ENCODE measurements at regions of chr3 and their contacts with region 1.

Region 1: GRCh38 chr3:183385698-183386613 is 42.5 kb downstream of the MCF2L2 start:
- DNase-seq: peak; percentile 71 to 88 (median 82)
- H3K4me3 ChIP-seq: no peak overlapping the region
- H3K27ac ChIP-seq: no peak overlapping the region
- H3K4me1 ChIP-seq: peaks cover 3 to 10% (median 7%) of the 10 kb centered on the region in 4 experiments
- H3K27me3 ChIP-seq: no peaks in the 10 kb centered on the region

Region 2: GRCh38 chr3:183122257-183122932 is 263.6 kb before region 1 on chr3:
- CTCF ChIA-PET with region 1: interaction called, 66 read pairs
- POLR2A ChIA-PET with region 1: no interaction called
- DNase-seq: peak; percentile 58 to 82 (median 75)
- H3K4me3 ChIP-seq: no peak overlapping the region
- H3K27ac ChIP-seq: no peak overlapping the region
- H3K4me1 ChIP-seq: no peaks in the 10 kb centered on the region
- H3K27me3 ChIP-seq: no peaks in the 10 kb centered on the region

Region 3: GRCh38 chr3:183193818-183194689 is 191.9 kb before region 1 on chr3:
- CTCF ChIA-PET with region 1: interaction called, 349 read pairs
- POLR2A ChIA-PET with region 1: no interaction called
- DNase-seq: no peak
- H3K4me3 ChIP-seq: no peak overlapping the region
- H3K27ac ChIP-seq: no peak overlapping the region
- H3K4me1 ChIP-seq: peaks cover 0 to 10% (median 2%) of the 10 kb centered on the region in 4 experiments
- H3K27me3 ChIP-seq: no peaks in the 10 kb centered on the region

Region 4: DNA sequence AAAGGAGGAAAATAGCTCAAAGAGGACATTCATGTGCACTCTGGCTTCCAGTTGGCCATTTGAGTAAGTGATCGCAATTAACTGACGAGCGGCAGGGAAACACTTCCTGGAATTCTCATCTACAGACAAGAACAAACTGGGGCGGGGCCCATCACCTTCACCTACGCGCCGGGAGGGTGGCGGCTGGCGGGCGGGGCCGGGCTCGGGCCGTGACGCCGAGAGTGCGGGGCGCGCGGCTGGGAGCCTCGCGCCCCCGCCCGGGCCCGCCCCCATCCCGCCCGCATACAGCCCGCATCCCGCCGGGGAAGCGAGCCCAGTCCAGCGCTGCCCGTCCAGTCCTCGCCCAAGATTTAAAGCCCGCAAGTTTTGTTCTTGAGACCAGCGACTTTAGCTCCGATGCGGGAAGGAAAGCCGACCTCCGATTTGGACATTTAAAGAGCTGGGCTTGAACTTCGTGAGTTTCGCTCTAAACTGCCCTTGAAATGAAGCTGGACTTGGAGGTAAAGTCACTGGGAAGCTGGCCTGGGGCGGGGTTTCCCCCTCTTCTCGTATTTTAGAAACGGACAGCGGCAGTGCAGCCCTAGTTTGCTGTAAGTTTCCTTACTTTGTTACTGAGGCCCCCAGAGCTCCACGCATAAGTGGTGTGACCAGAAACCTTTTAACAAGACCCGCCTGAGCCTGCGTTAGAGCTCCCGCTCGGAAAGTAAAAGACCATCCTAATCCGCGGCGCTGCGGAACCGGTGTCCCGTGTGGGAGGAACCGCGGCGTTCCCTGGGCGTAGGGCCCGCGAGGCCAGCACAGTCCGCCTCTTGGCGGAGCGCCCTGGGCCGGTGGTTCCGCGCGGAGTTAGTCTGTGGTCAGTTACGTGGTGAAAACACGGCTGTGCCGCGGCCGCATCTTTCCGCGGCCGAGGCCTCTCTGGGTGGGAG is 132.7 kb before region 1 on chr3 and contains the start of gene B3GNT5:
- CTCF ChIA-PET with region 1: interaction called, 15 read pairs
- POLR2A ChIA-PET with region 1: interaction called, 3 read pairs
- DNase-seq: peak in 2 of 3 donors; percentile 48 to 64
- H3K4me3 ChIP-seq: peak within 1 kb of the TSS; percentile 70 to 97 (median 87)
- H3K27ac ChIP-seq: peak within 1 kb of the TSS; percentile 73 to 88
- H3K4me1 ChIP-seq: peaks cover 6 to 42% (median 18%) of the 10 kb centered on the region in 4 experiments
- H3K27me3 ChIP-seq: no peaks in the 10 kb centered on the region

Measured in common myeloid progenitor, CD34-positive (primary cell).